Activated naive CD4-positive, alpha-beta T cell treated with anti-CD3 and anti-CD28 coated beads for 36 hours (primary cell): ENCODE measurements at regions of chr12 and their contacts with region 1.

Region 1: DNA sequence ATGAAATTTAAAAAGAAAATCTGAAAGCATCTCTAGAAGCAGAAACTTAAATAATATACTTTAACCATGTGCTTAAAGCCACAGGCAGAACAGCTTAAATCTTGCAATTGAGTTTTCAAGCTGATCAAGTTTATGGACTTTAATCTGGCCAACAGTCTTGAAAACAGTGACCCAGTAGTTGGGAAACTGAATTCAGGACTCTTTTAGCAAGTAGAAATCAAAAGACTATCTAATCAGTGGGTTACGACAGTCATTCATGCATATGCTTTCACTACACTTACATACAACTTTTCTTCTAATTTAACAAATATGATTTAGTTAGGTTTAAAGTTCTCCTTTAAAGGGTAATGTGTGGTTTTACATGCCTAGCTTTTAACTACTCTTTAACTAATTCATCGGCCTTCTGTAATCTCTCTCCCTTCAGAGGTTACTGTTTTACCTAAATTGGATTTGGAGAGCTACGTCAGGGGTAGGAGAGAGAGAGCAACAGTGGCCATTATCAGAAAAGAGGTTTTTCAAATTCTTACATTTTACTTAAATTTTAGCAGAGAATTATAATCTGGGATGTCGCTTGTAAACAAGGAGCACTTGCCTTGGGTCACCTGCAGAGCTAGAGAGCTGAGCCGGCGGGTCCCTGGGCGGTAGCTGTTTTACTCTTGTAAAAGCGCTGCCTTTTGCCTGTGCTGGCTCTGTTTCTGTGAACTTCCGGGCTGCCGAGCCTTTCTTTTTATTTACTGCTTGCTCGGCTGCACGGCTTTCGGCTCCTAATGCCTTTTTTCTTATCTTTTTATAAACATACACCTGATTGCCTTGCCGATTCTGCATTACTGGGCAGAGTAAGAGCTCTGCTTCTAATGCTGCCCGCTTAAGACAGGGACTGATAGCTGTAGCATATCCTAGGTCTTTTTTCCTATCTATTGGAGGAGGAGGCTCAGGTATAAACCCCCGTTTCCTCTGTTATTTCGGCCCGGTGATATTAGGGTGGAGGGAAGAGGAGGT is 17.4 kb upstream of the LYZ start:
- DNase-seq: peak; percentile 74
- H3K4me3 Mint-ChIP-seq: peak overlapping the region; percentile 80
- H3K27ac Mint-ChIP-seq: peak overlapping the region; percentile 90
- H3K4me1 Mint-ChIP-seq: peaks cover 60% of the 10 kb centered on the region
- H3K27me3 Mint-ChIP-seq: no peaks in the 10 kb centered on the region

Region 2: GRCh38 chr12:68932961-68933893 is 397.5 kb before region 1 on chr12 and contains the start of gene CPM:
- CTCF ChIA-PET with region 1: no interaction called
- intact Hi-C with region 1: loop called (anchors 10 kb)
- DNase-seq: peak; percentile 76
- H3K4me3 Mint-ChIP-seq: peak within 1 kb of the TSS; percentile 82
- H3K27ac Mint-ChIP-seq: peak within 1 kb of the TSS; percentile 58
- H3K4me1 Mint-ChIP-seq: peaks cover 21% of the 10 kb centered on the region
- H3K27me3 Mint-ChIP-seq: peaks cover 22% of the 10 kb centered on the region
- total RNA-seq, gene CPM: 50.5 to 55.1 TPM

Region 3: DNA sequence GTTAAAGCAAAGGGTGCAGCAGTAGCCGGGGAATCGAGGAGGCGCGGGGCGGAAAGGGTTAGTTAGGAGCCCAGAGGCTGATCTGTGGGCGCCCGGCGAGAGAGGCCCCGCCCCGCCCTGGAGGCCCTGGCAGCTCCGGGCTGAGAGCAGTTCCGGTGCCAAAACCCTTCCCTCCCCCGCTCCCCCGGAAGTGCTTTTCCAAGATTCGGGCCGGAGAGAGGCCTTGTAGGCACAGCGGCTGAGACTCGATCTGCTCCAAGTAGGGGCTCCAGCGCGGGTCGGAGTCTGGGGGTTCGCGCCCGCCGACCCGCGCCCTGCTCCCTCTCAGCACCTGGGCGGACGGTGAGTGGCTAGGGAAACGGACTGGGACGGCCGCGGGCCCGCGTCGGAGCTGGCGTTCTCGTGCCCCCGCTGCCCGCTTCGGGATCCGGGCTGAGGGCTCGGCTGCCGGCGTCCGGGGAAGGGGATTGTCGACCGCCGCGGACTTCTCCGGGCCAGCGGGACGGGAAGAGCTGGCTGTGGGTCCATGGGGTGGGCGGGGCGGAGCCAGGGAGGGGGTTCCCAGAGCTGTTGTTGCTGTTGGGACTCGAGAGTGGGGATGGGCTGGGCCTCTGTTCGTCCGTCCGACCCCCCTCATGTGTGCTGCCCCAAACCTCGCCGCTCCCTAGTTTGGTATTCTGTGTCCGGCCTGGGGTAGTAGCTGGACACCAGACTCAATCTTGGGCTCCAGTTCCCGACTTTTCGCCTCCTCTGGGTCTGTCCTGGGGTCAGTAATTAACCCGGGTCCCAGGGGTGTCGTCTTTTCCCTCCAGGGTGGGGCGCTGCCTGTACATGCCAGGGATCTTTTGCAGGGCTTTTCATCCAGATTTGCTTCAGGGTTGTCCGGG is 139.7 kb after region 1 on chr12 and contains the start of gene FRS2:
- CTCF ChIA-PET with region 1: no interaction called
- intact Hi-C with region 1: loop called (anchors 1 kb)
- DNase-seq: peak; percentile 93
- H3K4me3 Mint-ChIP-seq: peak within 1 kb of the TSS; percentile 98
- H3K27ac Mint-ChIP-seq: peak within 1 kb of the TSS; percentile 96
- H3K4me1 Mint-ChIP-seq: peaks cover 42% of the 10 kb centered on the region
- H3K27me3 Mint-ChIP-seq: no peaks in the 10 kb centered on the region
- total RNA-seq, gene FRS2: 7.9 TPM

Region 4: DNA sequence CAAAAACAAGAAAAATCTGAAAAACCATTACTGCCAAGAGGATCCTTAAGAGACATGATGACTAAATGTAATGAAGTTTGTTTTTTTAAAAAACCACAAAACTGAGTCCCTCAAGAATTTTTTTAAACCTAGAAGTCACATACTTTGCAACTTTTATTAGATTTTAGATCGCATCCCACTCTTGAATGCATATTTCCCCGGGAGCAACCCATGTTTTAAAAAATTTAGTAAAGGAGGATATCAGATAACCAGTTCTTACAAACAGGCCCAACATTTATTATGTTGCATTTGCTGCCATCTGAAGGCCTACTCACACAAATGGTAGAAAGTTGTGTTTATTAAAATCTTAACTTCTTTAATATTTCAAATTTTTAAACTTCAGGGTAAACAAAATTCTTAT is 210.2 kb after region 1 on chr12:
- CTCF ChIA-PET with region 1: no interaction called
- intact Hi-C with region 1: no loop called
- DNase-seq: no peak
- H3K4me3 Mint-ChIP-seq: no peak overlapping the region
- H3K27ac Mint-ChIP-seq: no peak overlapping the region
- H3K4me1 Mint-ChIP-seq: peaks cover 5% of the 10 kb centered on the region
- H3K27me3 Mint-ChIP-seq: no peaks in the 10 kb centered on the region

Region 5: GRCh38 chr12:69585189-69586062 is 254.7 kb after region 1 on chr12 and contains the start of gene CCT2:
- CTCF ChIA-PET with region 1: no interaction called
- intact Hi-C with region 1: loop called (anchors 1 kb)
- DNase-seq: peak; percentile 97
- H3K4me3 Mint-ChIP-seq: peak within 1 kb of the TSS; percentile 86
- H3K27ac Mint-ChIP-seq: peak within 1 kb of the TSS; percentile 92
- H3K4me1 Mint-ChIP-seq: peaks cover 27% of the 10 kb centered on the region
- H3K27me3 Mint-ChIP-seq: no peaks in the 10 kb centered on the region
- total RNA-seq, gene CCT2: 268 to 280 TPM